Heart left ventricle (tissue), 16 donors: ENCODE measurements at regions of chr21 and their contacts with region 1.

Region 1: GRCh38 chr21:42117229-42117966 is 46.3 kb downstream of the UMODL1 start:
- DNase-seq: peak; percentile 68 to 79 (median 69)
- ATAC-seq: peak; percentile 68 to 87 (median 77)
- H3K4me3 ChIP-seq: peak overlapping the region in 1 of 12 donors; percentile 32
- H3K27ac ChIP-seq: no peak overlapping the region
- H3K4me1 ChIP-seq: peaks cover 0 to 18% (median 6%) of the 10 kb centered on the region in 12 donors
- H3K27me3 ChIP-seq: peaks cover 0 to 59% (median 22%) of the 10 kb centered on the region in 9 donors
- CTCF ChIP-seq: peak; percentile 89 to 96 (median 94)
- POLR2A ChIP-seq: no peak

Region 2: DNA sequence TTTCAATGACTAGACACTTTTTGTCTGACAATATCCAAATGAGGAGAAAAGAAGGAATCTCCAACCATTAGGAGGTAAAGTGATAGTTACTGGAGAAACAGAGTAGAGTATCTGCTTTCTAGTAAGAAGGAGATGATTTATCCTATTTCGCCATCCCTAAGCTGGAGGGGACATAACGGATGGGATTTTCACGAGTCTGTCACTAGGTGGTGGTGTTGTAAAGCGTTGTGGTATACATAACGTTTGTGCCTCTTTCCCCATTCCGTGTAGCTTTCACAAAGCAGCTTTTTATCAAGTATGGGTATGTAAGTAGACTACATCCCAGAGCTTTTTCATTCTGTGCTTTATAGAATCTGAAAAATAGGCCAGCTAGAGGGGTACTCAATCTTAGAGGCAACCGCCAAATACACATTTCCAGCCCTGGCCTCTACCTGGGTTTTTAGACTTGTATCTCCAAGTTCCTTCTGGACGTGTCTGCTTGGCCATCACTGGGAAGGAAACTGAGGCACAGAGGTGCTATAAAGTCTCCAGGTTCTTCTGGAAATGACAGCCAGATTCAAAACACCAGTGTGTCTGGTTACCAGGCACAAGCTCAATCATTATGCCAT is 834.1 kb before region 1 on chr21:
- intact Hi-C with region 1: loop called in 1 of 10 experiments (anchors 10 kb)
- DNase-seq: peak in 2 of 5 donors; percentile 41 to 43
- ATAC-seq: peak; percentile 58 to 92 (median 91)
- H3K4me3 ChIP-seq: no peak overlapping the region
- H3K27ac ChIP-seq: no peak overlapping the region
- H3K4me1 ChIP-seq: peaks cover 0 to 4% (median 0%) of the 10 kb centered on the region in 12 donors
- H3K27me3 ChIP-seq: peaks cover 0 to 7% (median 0%) of the 10 kb centered on the region in 9 donors
- CTCF ChIP-seq: peak; percentile 60 to 87 (median 78)
- POLR2A ChIP-seq: no peak

Region 3: GRCh38 chr21:41816220-41817165 is 300.9 kb before region 1 on chr21:
- intact Hi-C with region 1: loop called (anchors 1 to 2 kb)
- DNase-seq: peak; percentile 48 to 83 (median 66)
- ATAC-seq: peak in 3 of 4 donors; percentile 68 to 91 (median 82)
- H3K4me3 ChIP-seq: no peak overlapping the region
- H3K27ac ChIP-seq: no peak overlapping the region
- H3K4me1 ChIP-seq: peaks cover 0 to 9% (median 0%) of the 10 kb centered on the region in 12 donors
- H3K27me3 ChIP-seq: no peaks in the 10 kb centered on the region
- CTCF ChIP-seq: peak; percentile 72 to 88 (median 80)
- POLR2A ChIP-seq: no peak

Region 4: GRCh38 chr21:41933313-41934086 is 183.9 kb before region 1 on chr21:
- intact Hi-C with region 1: loop called in 4 of 10 experiments (anchors 5 kb)
- DNase-seq: no peak
- ATAC-seq: peak; percentile 27 to 69 (median 44)
- H3K4me3 ChIP-seq: peak overlapping the region in 10 of 12 donors; percentile 6 to 47 (median 32)
- H3K27ac ChIP-seq: peak overlapping the region in 11 of 12 donors; percentile 26 to 81 (median 70)
- H3K4me1 ChIP-seq: peaks cover 0 to 35% (median 16%) of the 10 kb centered on the region in 12 donors
- H3K27me3 ChIP-seq: no peaks in the 10 kb centered on the region
- CTCF ChIP-seq: peak in 11 of 12 donors; percentile 10 to 56 (median 37)
- POLR2A ChIP-seq: no peak

Region 5: DNA sequence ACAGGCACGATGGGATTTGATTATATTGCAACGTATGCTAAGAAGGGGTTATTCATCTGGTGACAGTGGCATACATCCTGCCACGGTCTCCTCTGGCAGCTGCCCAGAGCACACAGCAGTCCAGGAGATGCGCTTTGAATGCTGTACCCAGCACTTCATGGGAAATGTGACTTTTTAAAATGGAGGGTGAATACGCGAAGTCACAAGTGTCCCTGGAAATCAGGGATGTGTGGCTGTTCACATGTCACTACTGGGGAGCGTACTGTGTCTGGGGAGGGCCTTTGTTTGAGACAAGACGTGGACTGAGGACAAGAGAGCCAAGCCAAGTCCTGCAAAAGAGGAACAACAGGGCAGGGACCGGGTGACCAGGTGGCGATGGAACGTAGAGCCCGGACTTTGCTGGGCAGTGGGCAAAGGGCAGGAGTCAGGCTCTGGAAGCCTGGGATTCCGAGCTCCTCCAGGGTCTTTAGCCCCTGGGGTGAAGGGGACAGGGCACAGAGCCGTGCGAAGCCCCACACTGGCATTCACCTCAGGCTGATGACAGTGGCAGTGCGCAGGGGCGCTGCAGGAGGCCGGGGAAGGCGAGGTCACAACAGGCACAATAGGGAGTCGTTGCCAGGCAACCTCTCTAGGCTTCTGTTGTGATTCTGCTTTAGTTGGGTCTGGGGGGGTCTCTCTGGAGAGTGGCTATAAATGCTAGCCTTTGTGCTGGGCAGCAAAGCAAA is 95.9 kb before region 1 on chr21:
- intact Hi-C with region 1: loop called in 1 of 10 experiments (anchors 5 kb)
- DNase-seq: no peak
- ATAC-seq: peak in 2 of 4 donors; percentile 6 to 24
- H3K4me3 ChIP-seq: no peak overlapping the region
- H3K27ac ChIP-seq: no peak overlapping the region
- H3K4me1 ChIP-seq: peaks cover 0 to 9% (median 0%) of the 10 kb centered on the region in 12 donors
- H3K27me3 ChIP-seq: peaks cover 0 to 19% (median 0%) of the 10 kb centered on the region in 9 donors
- CTCF ChIP-seq: no peak
- POLR2A ChIP-seq: no peak